ENCODE measurements at regions of chr7 and their contacts with region 1.

Region 1: GRCh38 chr7:136134503-136134902 is 157.3 kb upstream of the MTPN start:
- DNase-seq: no peak
- ATAC-seq: no peak
- H3K4me3 ChIP-seq: no peak overlapping the region
- H3K27ac ChIP-seq: no peak overlapping the region
- H3K4me1 ChIP-seq: no peaks in the 10 kb centered on the region
- H3K27me3 ChIP-seq: no peaks in the 10 kb centered on the region
- CTCF ChIP-seq: no peak

Region 2: DNA sequence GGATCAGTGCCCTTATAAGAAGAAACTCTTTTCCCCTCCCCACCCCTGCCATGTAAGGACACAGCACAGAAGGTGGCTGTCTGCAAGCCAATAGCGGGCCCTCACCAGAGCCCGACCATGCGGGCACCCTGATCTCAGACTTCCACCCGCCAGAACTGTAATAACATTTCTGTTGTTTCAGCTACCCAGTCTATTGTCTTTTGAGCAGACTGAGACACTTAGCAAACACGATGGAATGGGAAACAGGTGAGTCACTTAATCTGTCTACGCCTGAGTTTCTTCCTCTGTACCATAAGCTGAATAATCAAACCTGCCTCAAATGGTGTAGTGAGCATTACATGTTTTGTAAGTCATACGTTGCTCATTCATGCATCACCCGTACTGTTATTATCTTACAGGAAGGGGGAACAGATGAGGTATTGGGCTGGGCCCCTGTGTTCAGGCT is 842.7 kb before region 1 on chr7:
- intact Hi-C with region 1: no loop called
- DNase-seq: no peak
- ATAC-seq: no peak
- H3K4me3 ChIP-seq: no peak overlapping the region
- H3K27ac ChIP-seq: no peak overlapping the region
- H3K4me1 ChIP-seq: no peaks in the 10 kb centered on the region
- H3K27me3 ChIP-seq: no peaks in the 10 kb centered on the region
- CTCF ChIP-seq: no peak

Region 3: DNA sequence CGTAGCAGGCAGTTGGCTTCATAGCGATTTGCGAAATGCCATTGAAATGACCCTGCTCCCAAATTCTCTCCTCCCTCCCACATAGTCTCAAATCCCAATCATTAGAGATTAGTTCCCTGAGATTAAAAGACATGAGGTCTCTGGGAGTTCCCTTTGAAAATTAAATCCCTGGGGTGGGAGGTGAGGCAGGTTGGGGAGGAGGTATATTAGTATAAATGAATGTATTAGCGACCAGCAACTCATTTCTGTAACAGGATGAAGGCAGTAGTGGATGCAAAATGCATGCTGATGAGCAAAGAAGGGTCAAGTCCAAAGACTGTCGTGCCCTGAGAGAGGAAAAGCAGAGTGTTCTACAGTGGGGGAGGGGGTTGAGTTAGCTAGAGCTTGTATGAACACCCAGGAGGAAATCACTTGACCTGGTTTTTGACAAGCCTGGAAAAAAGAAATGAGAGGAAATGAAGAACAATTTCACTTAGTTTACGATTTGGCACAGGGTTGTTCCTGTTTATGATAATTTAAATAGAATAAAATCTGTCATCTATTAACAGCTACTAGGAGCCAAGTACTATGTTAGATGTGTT is 77.8 kb before region 1 on chr7:
- intact Hi-C with region 1: no loop called
- DNase-seq: no peak
- ATAC-seq: peak in 4 of 8 donors; percentile 38 to 65 (median 52)
- H3K4me3 ChIP-seq: no peak overlapping the region
- H3K27ac ChIP-seq: no peak overlapping the region
- H3K4me1 ChIP-seq: peaks cover 0 to 14% (median 0%) of the 10 kb centered on the region in 9 donors
- H3K27me3 ChIP-seq: no peaks in the 10 kb centered on the region
- CTCF ChIP-seq: no peak

Region 4: DNA sequence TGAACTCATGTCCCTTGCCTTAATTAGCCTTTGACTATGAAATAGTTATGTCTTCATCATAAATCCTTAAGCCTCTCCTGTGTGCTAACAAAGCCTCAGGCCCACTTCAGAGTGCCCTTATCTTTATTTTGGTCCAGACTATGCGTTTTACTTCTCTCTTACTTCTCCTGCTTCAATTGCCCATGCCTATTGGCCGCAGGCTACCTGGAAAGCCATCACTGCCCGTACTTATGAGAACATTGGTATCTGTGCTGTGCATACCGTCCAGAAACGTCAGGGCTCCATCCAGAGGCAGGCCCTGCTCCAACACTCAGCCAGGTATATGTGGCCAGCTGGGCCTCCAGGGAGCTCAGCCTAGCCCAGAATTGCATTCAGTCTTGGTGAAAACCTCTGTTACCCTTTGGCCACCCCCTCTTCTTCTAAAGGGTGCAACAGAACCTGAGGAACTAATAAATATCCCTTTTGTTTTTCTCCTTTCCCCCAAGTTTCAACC is 55.0 kb after region 1 on chr7:
- intact Hi-C with region 1: no loop called
- DNase-seq: no peak
- ATAC-seq: no peak
- H3K4me3 ChIP-seq: no peak overlapping the region
- H3K27ac ChIP-seq: no peak overlapping the region
- H3K4me1 ChIP-seq: no peaks in the 10 kb centered on the region
- H3K27me3 ChIP-seq: no peaks in the 10 kb centered on the region
- CTCF ChIP-seq: no peak

Region 5: DNA sequence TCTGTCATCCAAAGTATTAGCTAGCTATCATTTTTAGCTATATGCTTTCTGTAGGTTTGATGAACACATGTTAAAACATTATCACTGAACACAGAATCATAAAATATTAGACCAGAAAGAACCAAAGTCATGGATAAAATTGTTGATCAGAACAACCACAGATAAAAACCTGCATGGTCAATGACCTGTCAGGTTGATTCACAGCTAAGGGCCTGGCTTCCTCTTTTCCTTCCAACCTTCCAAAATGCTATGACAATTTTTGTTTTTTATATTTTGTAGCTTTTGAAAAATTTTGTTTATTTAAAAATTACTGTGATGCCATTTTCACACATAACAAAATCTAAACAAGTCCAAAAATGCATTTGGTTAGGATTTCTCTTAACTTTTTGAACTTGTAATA is 289.6 kb after region 1 on chr7:
- intact Hi-C with region 1: loop called in 1 of 10 experiments (anchors 5 kb)
- DNase-seq: no peak
- ATAC-seq: no peak
- H3K4me3 ChIP-seq: no peak overlapping the region
- H3K27ac ChIP-seq: no peak overlapping the region
- H3K4me1 ChIP-seq: no peaks in the 10 kb centered on the region
- H3K27me3 ChIP-seq: no peaks in the 10 kb centered on the region
- CTCF ChIP-seq: no peak